Heart right ventricle (tissue), 16 donors: ENCODE measurements at regions of chr14 and their contacts with region 1.

Region 1: GRCh38 chr14:34081576-34082136 is 130.8 kb upstream of the EGLN3 start:
- DNase-seq: no peak
- ATAC-seq: peak; percentile 53 to 89 (median 78)
- H3K4me3 ChIP-seq: no peak overlapping the region
- H3K27ac ChIP-seq: peak overlapping the region; percentile 79 to 97 (median 94)
- H3K4me1 ChIP-seq: peaks cover 0 to 48% (median 19%) of the 10 kb centered on the region in 9 donors
- H3K27me3 ChIP-seq: no peaks in the 10 kb centered on the region
- CTCF ChIP-seq: no peak

Region 2: GRCh38 chr14:33834466-33835260 is 247.0 kb before region 1 on chr14:
- intact Hi-C with region 1: no loop called
- DNase-seq: no peak
- ATAC-seq: no peak
- H3K4me3 ChIP-seq: no peak overlapping the region
- H3K27ac ChIP-seq: no peak overlapping the region
- H3K4me1 ChIP-seq: peaks cover 0 to 12% (median 4%) of the 10 kb centered on the region in 9 donors
- H3K27me3 ChIP-seq: no peaks in the 10 kb centered on the region
- CTCF ChIP-seq: no peak

Region 3: GRCh38 chr14:33964599-33965317 is 116.9 kb before region 1 on chr14:
- intact Hi-C with region 1: no loop called
- DNase-seq: no peak
- ATAC-seq: no peak
- H3K4me3 ChIP-seq: no peak overlapping the region
- H3K27ac ChIP-seq: no peak overlapping the region
- H3K4me1 ChIP-seq: no peaks in the 10 kb centered on the region
- H3K27me3 ChIP-seq: no peaks in the 10 kb centered on the region
- CTCF ChIP-seq: no peak

Region 4: DNA sequence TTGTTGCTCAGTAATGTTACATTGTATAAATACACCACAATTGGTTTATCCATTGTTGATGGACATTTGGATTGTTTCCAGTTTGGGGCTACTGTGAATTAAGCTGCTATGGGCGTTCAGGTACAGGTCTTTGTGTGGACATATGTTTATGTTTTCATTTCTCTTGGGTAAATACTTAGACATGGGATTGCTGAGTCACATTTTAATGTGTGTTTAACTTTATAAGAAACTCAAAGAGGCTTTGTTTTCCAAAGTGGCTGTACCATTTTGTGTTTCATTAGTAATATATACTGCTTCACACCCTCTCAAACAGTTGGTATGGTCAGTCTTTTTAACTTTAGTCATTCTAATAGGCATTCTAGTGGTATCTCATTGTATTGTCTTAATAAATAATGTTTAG is 155.4 kb after region 1 on chr14:
- intact Hi-C with region 1: loop called in 1 of 10 experiments (anchors 10 kb)
- DNase-seq: no peak
- ATAC-seq: no peak
- H3K4me3 ChIP-seq: no peak overlapping the region
- H3K27ac ChIP-seq: no peak overlapping the region
- H3K4me1 ChIP-seq: peaks cover 0 to 51% (median 10%) of the 10 kb centered on the region in 9 donors
- H3K27me3 ChIP-seq: no peaks in the 10 kb centered on the region
- CTCF ChIP-seq: no peak